K562 (cell line): ENCODE measurements at regions of chr3 and their contacts with region 1.

Region 1: DNA sequence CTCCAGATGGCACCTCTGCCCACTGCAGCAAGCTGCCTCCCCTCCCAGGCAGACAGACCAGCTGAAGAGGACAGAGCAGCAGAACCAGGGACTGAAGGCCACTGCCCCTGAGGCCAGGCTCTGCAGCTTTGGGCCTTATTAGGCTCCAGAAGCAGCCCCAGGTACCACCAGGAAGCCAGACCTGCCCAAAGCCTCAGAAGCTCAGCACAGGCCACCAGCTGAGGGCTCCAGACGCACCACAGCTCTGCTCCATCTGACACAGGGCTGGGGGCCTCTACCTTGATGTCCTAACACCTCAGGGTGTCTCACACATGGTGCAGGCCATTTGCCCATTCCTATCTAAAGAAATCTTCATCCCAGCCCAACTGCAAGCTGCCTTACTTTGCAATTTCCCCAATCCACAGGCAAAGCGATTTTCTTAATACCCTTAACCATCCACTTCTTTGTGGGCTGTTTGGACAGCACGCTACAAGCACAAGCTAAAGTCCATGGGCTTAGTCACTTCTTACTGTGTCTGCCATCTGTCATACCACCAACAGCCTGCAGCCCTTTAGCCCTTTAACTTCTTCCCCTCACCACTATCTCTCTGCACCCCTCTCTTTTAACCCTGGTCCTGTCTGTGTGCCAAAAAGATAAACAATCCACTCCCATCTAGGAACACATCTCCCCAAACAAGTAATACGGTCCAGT is 112.1 kb downstream of the IQSEC1 start:
- DNase-seq: peak in 2 of 4 experiments; percentile 49 to 65
- ATAC-seq: peak; percentile 9; the same call in 2 of the 3 replicates
- H3K4me3 ChIP-seq: no peak overlapping the region
- H3K27ac ChIP-seq: no peak overlapping the region; the same call in 2 of the 3 replicates
- H3K4me1 ChIP-seq: peaks cover 79 to 87% of the 10 kb centered on the region in 2 experiments
- H3K27me3 ChIP-seq: no peaks in the 10 kb centered on the region
- CTCF ChIP-seq: no peak
- EP300 ChIP-seq: no peak
- POLR2A ChIP-seq: no peak
- RAD21 ChIP-seq: no peak

Region 2: DNA sequence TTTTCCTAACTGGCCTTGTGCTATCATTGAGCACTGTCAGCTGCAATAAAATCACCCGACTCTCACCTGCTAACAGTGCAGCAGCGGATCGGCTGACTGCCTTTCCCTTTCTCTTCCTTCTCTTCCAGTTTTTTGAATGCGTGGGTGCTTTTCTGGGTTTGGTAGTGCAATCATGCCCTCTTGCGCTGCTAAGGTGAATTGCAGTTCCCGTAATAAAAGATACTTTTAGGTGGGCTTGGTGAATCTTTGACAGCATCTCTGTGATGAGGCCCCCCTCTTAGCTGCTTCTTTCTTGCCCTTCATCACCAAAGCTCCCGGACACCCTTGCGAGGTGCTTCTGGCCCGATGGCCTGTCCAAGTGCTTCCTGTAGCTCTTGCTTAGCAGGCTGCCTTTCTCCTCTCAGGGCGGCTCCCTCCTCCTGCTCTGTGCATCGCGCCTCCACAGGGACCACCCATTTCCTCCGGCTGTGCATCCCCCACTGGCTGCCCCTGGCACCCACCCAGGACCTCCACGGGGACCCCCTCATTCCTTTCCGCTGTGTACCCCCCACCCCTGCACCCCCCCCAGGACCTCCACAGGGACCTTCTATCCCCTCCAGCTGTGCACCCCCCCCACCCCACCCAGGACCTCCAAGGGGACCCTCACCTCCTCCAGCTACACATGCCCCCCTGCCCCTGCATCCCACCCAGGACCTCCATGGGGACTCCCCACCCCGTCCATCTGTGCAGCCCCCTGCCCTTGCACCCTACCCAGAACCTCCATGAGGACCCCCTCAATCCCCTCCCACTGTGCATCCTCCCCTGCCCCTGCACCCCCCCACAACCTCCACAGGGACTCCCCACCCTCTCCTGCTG is 68.9 kb before region 1 on chr3:
- CTCF ChIA-PET with region 1: no interaction called
- POLR2A ChIA-PET with region 1: no interaction called
- in situ Hi-C with region 1: no loop called
- intact Hi-C with region 1: no loop called
- DNase-seq: peak; percentile 70 to 81 (median 73)
- ATAC-seq: peak; percentile 60
- H3K4me3 ChIP-seq: no peak overlapping the region
- H3K27ac ChIP-seq: no peak overlapping the region
- H3K4me1 ChIP-seq: peaks cover 9 to 20% of the 10 kb centered on the region in 2 experiments; a peak in 3 of 5 replicates
- H3K27me3 ChIP-seq: no peaks in the 10 kb centered on the region
- CTCF ChIP-seq: peak; percentile 94 to 98 (median 98)
- EP300 ChIP-seq: no peak
- POLR2A ChIP-seq: no peak
- RAD21 ChIP-seq: peak; percentile 98 to 99

Region 3: GRCh38 chr3:12947308-12948069 is 13.7 kb before region 1 on chr3:
- CTCF ChIA-PET with region 1: no interaction called
- POLR2A ChIA-PET with region 1: interaction called, 11 read pairs
- in situ Hi-C with region 1: no loop called
- intact Hi-C with region 1: no loop called
- DNase-seq: peak; percentile 64 to 71 (median 66)
- ATAC-seq: peak; percentile 76
- H3K4me3 ChIP-seq: no peak overlapping the region
- H3K27ac ChIP-seq: peak overlapping the region; percentile 31
- H3K4me1 ChIP-seq: peaks cover 46 to 78% of the 10 kb centered on the region in 2 experiments; a peak in 4 of 5 replicates
- H3K27me3 ChIP-seq: no peaks in the 10 kb centered on the region
- CTCF ChIP-seq: peak; percentile 37 to 58 (median 38); a peak in 5 of 6 replicates
- EP300 ChIP-seq: no peak
- POLR2A ChIP-seq: no peak
- RAD21 ChIP-seq: peak in 1 of 2 experiments; percentile 20; a peak in 2 of 4 replicates